ENCODE measurements at regions of chr2 and their contacts with region 1.

Region 1: GRCh38 chr2:25606892-25607291 is 66.5 kb downstream of the DTNB start:
- DNase-seq: no peak
- ATAC-seq: no peak
- H3K4me3 ChIP-seq: no peak overlapping the region
- H3K27ac ChIP-seq: no peak overlapping the region
- H3K4me1 ChIP-seq: no peaks in the 10 kb centered on the region
- H3K27me3 ChIP-seq: no peaks in the 10 kb centered on the region

Region 2: DNA sequence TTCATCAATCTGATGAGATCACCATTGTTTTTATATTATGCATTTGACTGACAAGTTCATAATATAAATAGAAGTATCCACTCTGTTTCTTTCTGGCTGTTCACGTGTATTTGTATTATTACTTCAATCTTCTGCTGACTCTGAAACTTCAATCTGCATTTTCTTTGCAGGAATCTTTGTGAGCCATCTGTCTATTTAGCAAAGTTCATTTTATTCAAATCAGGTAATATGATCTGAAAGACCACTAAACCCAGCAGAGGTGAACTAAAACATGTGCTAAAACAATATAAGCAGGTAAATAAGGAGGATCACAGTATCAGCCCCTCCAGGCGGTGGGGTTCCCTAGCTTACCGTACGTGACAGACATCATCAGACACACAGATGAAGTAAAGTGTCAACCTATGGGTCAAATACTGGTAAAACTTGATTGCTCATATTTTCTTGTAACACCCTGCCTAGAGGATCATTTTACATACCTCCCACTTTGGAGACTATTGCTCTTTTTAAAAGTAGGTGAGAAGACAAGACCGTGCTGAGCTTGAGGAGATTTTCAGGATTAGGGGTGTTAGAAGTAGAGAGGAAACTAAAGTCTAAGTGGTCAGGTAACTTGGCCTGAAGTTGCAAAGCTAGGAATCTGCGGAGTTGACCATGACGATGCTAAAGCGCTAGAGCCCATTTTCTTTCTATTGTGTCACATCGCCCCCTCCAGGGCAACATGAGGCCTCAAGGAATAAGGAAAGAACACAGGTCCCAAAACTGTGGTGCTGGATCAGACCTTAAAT is 57.5 kb after region 1 on chr2:
- intact Hi-C with region 1: loop called (anchors 1 to 2 kb)
- DNase-seq: peak; percentile 70 to 80
- ATAC-seq: peak; percentile 88
- H3K4me3 ChIP-seq: no peak overlapping the region
- H3K27ac ChIP-seq: no peak overlapping the region
- H3K4me1 ChIP-seq: no peaks in the 10 kb centered on the region
- H3K27me3 ChIP-seq: no peaks in the 10 kb centered on the region

Region 3: GRCh38 chr2:25794544-25795276 is 187.8 kb after region 1 on chr2:
- intact Hi-C with region 1: no loop called
- DNase-seq: no peak
- ATAC-seq: no peak
- H3K4me3 ChIP-seq: no peak overlapping the region
- H3K27ac ChIP-seq: no peak overlapping the region
- H3K4me1 ChIP-seq: no peaks in the 10 kb centered on the region
- H3K27me3 ChIP-seq: no peaks in the 10 kb centered on the region

Measured in aorta (tissue), 5 donors.